ENCODE measurements at regions of chr10 and their contacts with region 1.

Region 1: GRCh38 chr10:61635931-61636330 is 26.8 kb upstream of the CABCOCO1 start:
- DNase-seq: peak; percentile 76
- ATAC-seq: no peak
- H3K4me3 ChIP-seq: no peak overlapping the region
- H3K27ac ChIP-seq: peak overlapping the region; percentile 33; the same call in 1 of the 2 replicates
- H3K4me1 ChIP-seq: peaks cover 12% of the 10 kb centered on the region
- H3K27me3 ChIP-seq: no peaks in the 10 kb centered on the region
- CTCF ChIP-seq: no peak
- POLR2A ChIP-seq: no peak
- RAD21 ChIP-seq: no peak

Region 2: DNA sequence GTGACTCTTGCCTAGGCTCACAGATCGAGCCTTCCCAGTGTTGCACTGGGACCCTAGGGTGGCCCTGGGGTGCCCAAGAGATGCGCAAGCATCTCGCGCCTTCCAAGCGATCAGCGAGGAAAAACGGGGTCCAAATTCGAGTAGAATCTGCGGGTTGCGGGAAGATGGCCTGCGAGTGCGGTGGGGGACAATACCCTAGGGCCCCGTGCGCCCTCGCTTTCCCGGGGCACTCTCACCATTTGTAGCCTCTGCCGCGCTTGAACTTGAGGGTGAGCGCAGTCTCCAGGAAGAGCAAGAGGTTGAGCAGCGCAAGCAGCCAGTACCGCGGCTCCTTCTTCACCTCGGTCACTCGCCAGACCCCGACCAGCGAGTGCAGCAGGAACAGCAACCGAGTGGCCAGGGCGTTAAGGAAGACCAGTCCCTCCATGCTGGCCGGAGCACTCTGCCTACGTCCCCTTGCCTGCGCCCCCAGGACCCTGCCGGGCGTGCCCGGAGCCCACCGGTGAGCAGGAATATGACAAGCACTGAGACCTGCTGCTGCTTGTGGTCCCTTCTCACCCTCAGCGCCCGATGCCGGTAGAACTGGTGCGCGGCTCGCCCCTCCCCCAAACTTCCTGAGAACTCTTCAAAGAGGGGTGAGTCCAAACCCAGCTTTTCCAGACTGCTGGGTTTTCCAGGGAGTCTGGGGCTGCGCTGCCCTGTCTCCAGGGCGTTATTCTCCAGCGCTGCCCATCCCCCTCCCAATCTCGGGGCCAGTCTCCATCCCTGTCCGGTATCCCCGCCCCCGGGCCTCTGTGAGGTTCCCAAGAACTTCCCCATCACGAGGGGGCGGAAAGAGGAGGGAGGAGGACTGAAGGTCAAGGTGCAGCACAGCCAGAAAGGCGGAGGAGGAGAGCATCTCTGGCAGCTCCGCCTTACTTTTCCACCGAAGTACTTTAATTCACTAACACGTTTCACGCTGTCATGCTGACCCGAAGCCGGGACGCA is 183.0 kb before region 1 on chr10 and contains the start of gene TMEM26:
- CTCF ChIA-PET with region 1: no interaction called
- POLR2A ChIA-PET with region 1: no interaction called
- dilution Hi-C with region 1: no loop called
- in situ Hi-C with region 1: no loop called
- intact Hi-C with region 1: loop called (anchors 10 kb)
- DNase-seq: peak; percentile 30
- ATAC-seq: peak; percentile 83
- H3K4me3 ChIP-seq: peak within 1 kb of the TSS; percentile 65
- H3K27ac ChIP-seq: peak within 1 kb of the TSS; percentile 30
- H3K4me1 ChIP-seq: peaks cover 11% of the 10 kb centered on the region; the same call in 1 of the 2 replicates
- H3K27me3 ChIP-seq: peaks cover 3% of the 10 kb centered on the region; the same call in 1 of the 2 replicates
- CTCF ChIP-seq: no peak
- POLR2A ChIP-seq: no peak
- RAD21 ChIP-seq: no peak
- total RNA-seq, gene TMEM26: 0.36 and 0.56 TPM in 2 replicates

Region 3: GRCh38 chr10:61835069-61835945 is 199.4 kb after region 1 on chr10:
- CTCF ChIA-PET with region 1: no interaction called
- POLR2A ChIA-PET with region 1: no interaction called
- dilution Hi-C with region 1: no loop called
- in situ Hi-C with region 1: no loop called
- intact Hi-C with region 1: no loop called
- DNase-seq: peak; percentile 78
- ATAC-seq: peak; percentile 59
- H3K4me3 ChIP-seq: no peak overlapping the region
- H3K27ac ChIP-seq: peak overlapping the region; percentile 39; the same call in 1 of the 2 replicates
- H3K4me1 ChIP-seq: peaks cover 14% of the 10 kb centered on the region
- H3K27me3 ChIP-seq: no peaks in the 10 kb centered on the region
- CTCF ChIP-seq: peak; percentile 50
- POLR2A ChIP-seq: no peak
- RAD21 ChIP-seq: peak; percentile 62

Region 4: DNA sequence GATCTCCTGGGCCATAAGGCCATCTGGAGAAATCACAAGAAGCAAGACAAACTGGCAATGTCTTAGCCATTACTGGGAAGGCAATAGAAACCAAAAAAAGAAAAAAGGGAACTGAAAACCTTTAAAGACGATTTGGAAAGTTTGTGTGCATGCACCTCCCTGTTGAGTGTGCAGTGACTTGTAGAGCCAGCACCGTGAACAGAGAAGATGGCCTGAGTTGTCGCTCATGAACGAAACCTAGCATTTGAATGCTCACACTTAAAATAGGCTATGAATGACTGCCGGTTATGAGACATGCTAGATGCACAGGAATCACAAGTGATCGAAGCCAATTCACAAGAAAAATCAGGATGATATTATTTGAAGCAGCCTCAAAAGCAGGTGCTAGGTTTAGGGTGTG is 1017.3 kb after region 1 on chr10:
- CTCF ChIA-PET with region 1: no interaction called
- POLR2A ChIA-PET with region 1: no interaction called
- dilution Hi-C with region 1: no loop called
- in situ Hi-C with region 1: no loop called
- intact Hi-C with region 1: no loop called
- DNase-seq: no peak
- ATAC-seq: no peak
- H3K4me3 ChIP-seq: no peak overlapping the region
- H3K27ac ChIP-seq: no peak overlapping the region
- H3K4me1 ChIP-seq: no peaks in the 10 kb centered on the region
- H3K27me3 ChIP-seq: peaks cover 4% of the 10 kb centered on the region; the same call in 1 of the 2 replicates
- CTCF ChIP-seq: no peak
- POLR2A ChIP-seq: no peak
- RAD21 ChIP-seq: no peak